Right ventricle myocardium superior (tissue), 1 donor: ENCODE measurements at regions of chr6 and their contacts with region 1.

Region 1: DNA sequence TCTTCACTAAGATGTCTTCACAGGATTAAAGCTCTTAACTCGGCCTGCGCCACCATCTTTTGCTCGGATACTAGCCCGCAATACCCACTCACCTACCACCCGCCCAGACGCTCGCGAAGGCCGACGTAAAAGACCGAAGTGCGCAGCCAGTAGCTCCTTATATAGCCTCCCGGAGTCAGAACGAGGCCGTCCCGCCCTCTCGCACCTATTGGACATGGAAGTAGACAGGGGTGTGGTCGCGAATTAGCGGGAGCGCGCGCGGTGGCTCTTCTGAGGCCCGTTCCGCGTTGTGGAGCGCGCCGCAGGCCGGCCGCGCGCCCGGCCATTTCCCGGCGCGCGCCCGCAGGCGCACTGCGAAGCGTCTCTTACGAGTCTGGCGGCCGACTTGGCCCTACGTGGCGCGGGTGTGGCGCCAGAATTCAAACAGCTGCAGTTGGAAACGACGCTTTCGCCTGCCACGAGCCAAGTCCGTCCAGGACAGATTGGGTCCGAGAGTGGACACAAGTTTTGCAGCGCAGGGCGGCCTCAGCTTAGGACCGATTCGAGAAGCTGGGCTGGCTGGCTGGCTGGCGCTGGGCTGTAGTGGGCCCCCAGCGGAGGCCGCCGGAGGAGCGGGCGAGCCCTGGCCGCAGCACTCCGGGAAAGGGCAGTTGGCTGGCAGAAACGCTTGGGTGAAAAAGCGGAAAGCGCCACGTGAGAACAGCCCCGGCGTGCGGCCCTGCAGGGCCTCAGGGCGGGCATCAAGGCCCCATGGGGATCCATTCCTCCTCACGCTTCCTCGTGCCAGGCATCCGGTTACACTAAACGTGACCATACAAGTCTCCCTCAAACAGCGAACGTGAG is 36.1 kb upstream of the SYNCRIP start:
- DNase-seq: peak; percentile 99
- ATAC-seq: peak; percentile 99

Region 2: DNA sequence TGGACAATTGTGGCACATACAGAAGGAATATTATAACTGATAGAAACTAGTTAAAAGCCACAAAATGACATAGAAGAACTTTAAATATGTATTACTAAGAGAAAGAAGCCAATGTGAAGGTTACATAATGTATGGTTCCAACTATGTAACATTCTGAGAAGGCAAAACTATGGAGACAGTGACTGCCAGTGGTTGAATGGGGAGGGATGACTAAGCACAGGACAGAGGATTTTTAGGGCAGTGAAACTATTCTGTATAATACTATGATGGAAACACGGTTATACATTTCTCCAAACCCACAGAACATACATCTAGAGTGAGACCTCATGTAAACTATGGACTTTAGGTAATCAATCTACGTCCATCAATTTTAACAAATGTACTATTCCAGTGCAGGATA is 58.5 kb before region 1 on chr6:
- intact Hi-C with region 1: no loop called
- DNase-seq: no peak
- ATAC-seq: no peak

Region 3: DNA sequence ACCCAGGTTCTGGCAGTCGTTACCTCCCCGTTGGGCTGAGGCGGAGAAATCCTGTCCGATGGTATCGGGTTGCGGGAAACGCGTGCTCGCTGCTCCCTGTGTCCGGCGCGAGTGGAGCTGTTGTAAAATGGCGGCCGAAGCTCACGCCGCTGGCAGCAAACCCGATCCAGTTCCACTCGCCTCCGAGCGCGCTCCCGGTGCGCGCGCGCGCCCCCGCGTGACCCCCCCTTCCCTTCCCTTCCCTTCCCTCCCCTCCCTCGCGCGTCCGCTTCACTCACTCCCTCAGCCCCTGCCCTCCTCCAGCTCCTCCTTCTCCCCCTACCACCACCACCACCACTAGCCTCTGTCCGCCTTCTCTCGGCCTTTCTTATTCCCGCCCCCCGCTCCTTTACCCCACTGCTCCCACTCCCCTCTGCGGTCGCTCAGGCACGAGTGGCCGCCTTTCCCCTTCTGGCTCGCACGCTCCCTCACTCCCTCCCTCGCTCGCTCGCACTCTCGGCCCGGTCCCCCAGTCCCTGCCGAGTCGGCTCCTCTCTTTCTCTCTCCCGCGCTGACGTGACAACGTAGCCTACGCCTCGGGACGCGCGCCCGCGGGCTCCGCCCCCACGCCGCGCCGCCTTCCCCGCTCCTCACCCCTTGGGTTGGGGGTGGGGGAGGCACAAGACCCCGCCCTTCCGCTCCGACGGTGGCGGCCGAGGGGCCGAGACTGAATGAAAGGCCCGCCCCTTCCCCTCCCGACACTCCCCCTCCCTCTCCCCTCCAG is 35.9 kb before region 1 on chr6 and contains the start of gene SYNCRIP:
- intact Hi-C with region 1: loop called (anchors 2 kb)
- DNase-seq: peak; percentile 99
- ATAC-seq: peak; percentile 88
- total RNA-seq, gene SYNCRIP: 55.7 TPM

Region 4: GRCh38 chr6:85772641-85773040 is 93.8 kb after region 1 on chr6:
- intact Hi-C with region 1: no loop called
- DNase-seq: no peak
- ATAC-seq: no peak